ENCODE measurements at regions of chr3 and their contacts with region 1.

Region 1: DNA sequence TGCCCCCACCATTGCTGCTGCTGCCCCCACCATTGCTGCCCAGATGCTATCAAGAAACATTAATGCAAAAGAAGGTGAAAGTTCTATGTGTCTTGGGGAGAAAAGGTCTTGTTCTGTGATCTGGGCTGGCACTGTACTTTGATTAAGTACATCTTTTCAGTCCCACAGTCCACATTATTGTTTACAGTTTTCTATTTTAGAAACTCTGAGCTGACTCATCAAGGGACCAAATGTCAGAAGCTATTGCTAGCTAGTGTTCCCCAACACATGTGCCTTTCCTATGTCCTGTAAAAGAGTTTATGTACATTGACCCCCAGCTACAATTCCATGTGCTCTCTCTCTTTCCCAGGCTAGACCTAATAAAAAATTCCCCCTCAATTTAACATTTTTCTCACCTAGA is 264.7 kb upstream of the NECTIN3 start:
- DNase-seq: no peak
- ATAC-seq: no peak
- H3K4me3 ChIP-seq: no peak overlapping the region
- H3K4me1 ChIP-seq: peaks cover 5% of the 10 kb centered on the region
- CTCF ChIP-seq: no peak

Region 2: GRCh38 chr3:110608566-110608965 is 198.4 kb before region 1 on chr3:
- intact Hi-C with region 1: no loop called
- DNase-seq: no peak
- ATAC-seq: no peak
- H3K4me3 ChIP-seq: no peak overlapping the region
- H3K4me1 ChIP-seq: no peaks in the 10 kb centered on the region
- CTCF ChIP-seq: no peak

Region 3: GRCh38 chr3:110743202-110743601 is 63.7 kb before region 1 on chr3:
- intact Hi-C with region 1: loop called in 1 of 2 experiments (anchors 10 kb)
- DNase-seq: peak in 1 of 3 donors; percentile 20
- ATAC-seq: peak; percentile 94
- H3K4me3 ChIP-seq: no peak overlapping the region
- H3K4me1 ChIP-seq: no peaks in the 10 kb centered on the region
- CTCF ChIP-seq: no peak

Region 4: GRCh38 chr3:111252779-111253178 is 445.9 kb after region 1 on chr3:
- intact Hi-C with region 1: no loop called
- DNase-seq: peak in 1 of 3 donors; percentile 16
- ATAC-seq: peak; percentile 62
- H3K4me3 ChIP-seq: no peak overlapping the region
- H3K4me1 ChIP-seq: no peaks in the 10 kb centered on the region
- CTCF ChIP-seq: no peak

Measured in mucosa of descending colon (tissue), 3 donors.